Activated T-helper 1 cell treated with anti-CD3 and anti-CD28 coated beads, Interleukin-12 subunit alpha, Interleukin-12 subunit beta, Interleukin-2, Interleukin-4 antibody, amounts not matched to agents 30 ng/mL and 10 ng/mL and 1 ng/mL, durations not matched to agents 14 hours and 24 hours and 36 hours (primary cell): ENCODE measurements at regions of chr4 and their contacts with region 1.

Region 1: GRCh38 chr4:51842554-51843308 is at the start of gene DCUN1D4:
- DNase-seq: peak; percentile 98
- H3K4me3 Mint-ChIP-seq: peak within 1 kb of the TSS; percentile 95
- H3K27ac Mint-ChIP-seq: peak within 1 kb of the TSS; percentile 98
- H3K4me1 Mint-ChIP-seq: peaks cover 21% of the 10 kb centered on the region
- H3K27me3 Mint-ChIP-seq: peaks cover 9% of the 10 kb centered on the region
- total RNA-seq, gene DCUN1D4: 29.7 and 40.7 TPM in 2 replicates

Region 2: DNA sequence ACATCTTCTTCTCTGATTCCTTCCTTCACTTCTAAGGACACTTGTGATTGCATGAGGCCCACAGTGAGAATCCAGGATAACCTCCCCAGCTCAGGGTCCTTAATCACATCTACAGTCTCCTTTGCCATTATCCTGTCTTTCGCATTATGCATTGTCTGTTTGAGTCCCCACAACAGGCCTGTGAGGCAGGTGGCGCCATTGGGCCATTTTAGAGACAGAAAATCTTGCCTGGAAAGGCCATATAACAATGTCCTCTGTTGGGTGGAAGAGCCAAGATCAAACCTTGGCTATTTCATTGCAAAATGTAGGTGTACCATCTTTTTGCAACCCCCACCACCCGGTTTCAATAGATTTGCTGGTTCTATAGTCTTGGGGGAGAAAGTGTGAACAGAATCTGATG is 11.6 kb before region 1 on chr4:
- intact Hi-C with region 1: loop called (anchors 1 kb)
- DNase-seq: peak; percentile 26
- H3K4me3 Mint-ChIP-seq: no peak overlapping the region
- H3K27ac Mint-ChIP-seq: no peak overlapping the region
- H3K4me1 Mint-ChIP-seq: no peaks in the 10 kb centered on the region
- H3K27me3 Mint-ChIP-seq: peaks cover 13% of the 10 kb centered on the region

Region 3: DNA sequence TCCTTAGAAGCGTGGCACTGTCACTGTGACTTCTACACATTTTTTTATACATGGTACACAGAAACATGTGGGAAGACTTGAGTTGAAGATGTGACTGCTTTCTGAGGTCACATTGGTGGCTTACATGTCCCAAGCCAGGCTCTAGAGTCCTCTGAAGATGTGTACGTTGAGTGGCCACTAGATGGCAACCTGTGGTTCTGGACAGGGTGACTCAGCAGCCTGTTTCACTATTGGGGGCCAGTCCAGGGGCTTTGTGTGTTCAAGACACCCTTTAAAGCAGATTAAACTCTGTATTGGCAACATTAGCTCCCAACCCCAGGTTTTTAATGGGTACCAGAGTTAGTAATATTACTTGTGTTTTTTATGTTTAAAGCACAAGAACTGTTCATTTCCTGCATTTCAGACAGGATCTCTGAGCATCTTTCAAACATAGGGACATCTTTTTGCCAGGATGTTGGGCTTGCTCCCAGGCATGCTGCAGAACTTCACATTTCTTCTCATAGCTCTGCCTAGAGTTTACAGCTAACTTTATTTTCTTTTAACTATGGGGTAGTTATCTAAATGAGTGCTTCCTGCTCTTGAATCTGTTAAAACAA is 53.2 kb after region 1 on chr4:
- intact Hi-C with region 1: loop called (anchors 2 kb)
- DNase-seq: peak; percentile 27
- H3K4me3 Mint-ChIP-seq: no peak overlapping the region
- H3K27ac Mint-ChIP-seq: peak overlapping the region; percentile 37
- H3K4me1 Mint-ChIP-seq: peaks cover 22% of the 10 kb centered on the region
- H3K27me3 Mint-ChIP-seq: no peaks in the 10 kb centered on the region

Region 4: GRCh38 chr4:52051619-52052474 is 209.1 kb after region 1 on chr4:
- intact Hi-C with region 1: no loop called
- DNase-seq: no peak
- H3K4me3 Mint-ChIP-seq: peak overlapping the region; percentile 70
- H3K27ac Mint-ChIP-seq: no peak overlapping the region
- H3K4me1 Mint-ChIP-seq: peaks cover 9% of the 10 kb centered on the region
- H3K27me3 Mint-ChIP-seq: peaks cover 73% of the 10 kb centered on the region

Region 5: DNA sequence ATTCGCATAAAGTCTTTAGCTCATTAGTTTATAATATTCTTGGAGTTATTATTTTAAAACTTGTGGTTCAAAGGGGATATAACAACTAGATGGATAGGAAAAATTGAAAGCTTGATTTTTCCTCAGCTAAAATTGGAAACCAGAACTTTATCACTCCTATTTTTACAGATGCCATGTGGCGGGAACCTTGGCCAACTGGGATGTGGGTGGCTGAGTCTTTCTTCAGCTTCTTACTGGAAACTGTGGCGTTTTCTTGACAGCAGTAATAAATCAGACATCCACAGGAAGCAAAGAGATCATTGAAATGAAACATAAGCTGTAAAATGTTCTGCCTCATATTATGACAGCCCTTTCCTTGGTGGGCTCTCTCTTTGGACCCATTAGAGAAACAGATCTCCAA is 292.4 kb after region 1 on chr4:
- intact Hi-C with region 1: no loop called
- DNase-seq: no peak
- H3K4me3 Mint-ChIP-seq: no peak overlapping the region
- H3K27ac Mint-ChIP-seq: no peak overlapping the region
- H3K4me1 Mint-ChIP-seq: no peaks in the 10 kb centered on the region
- H3K27me3 Mint-ChIP-seq: peaks cover 2% of the 10 kb centered on the region